K562 (cell line): ENCODE measurements at regions of chr1 and their contacts with region 1.

Region 1: GRCh38 chr1:32215629-32216480 is 6.3 kb downstream of the TMEM234 start:
- DNase-seq: peak; percentile 72 to 87 (median 79)
- ATAC-seq: peak; percentile 96
- H3K4me3 ChIP-seq: no peak overlapping the region
- H3K27ac ChIP-seq: no peak overlapping the region
- H3K4me1 ChIP-seq: peaks cover 4 to 10% of the 10 kb centered on the region in 2 experiments; a peak in 4 of 5 replicates
- H3K27me3 ChIP-seq: no peaks in the 10 kb centered on the region
- CTCF ChIP-seq: peak; percentile 93 to 96 (median 96)
- EP300 ChIP-seq: no peak
- POLR2A ChIP-seq: no peak
- RAD21 ChIP-seq: peak; percentile 82 to 88

Region 2: DNA sequence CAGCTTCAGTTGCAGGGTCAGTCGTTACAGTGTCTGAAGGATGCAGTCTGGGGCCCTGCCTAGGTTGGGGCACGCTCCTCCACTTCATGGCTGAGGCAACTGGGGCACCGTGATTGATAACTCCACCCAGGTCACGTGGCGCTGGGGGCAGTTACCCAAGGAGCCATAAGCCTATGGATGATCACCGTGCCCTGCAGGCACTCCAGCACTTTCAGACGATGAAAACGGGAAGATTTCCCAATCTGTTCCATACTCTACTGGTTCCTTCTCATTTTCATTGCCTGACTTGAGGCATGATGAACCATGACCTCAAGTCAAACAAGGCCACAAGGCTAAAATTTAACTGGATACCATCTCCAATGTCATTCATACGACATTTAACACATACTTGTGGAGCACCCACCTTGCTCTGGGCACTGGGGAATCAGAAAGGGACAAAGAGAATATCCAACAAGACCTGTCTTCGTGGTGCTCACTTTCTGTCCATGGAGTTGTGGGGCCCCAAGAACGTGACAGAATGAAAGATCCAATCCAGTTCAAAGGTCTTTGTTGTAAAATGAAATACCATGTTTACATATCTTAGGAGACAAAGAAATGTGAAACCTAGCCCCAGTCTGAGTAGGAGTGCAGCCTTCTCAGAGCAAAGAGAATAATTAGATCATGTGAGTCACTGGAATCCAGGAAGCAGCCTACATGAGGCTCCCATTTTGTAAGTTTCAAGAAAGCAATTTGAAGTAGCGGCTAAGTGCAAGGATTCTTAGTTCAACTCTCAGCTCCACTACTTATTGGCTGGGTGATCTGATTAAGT is 360.6 kb before region 1 on chr1:
- CTCF ChIA-PET with region 1: no interaction called
- POLR2A ChIA-PET with region 1: no interaction called
- in situ Hi-C with region 1: no loop called
- intact Hi-C with region 1: no loop called
- DNase-seq: peak in 1 of 4 experiments; percentile 26
- ATAC-seq: peak; percentile 59
- H3K4me3 ChIP-seq: no peak overlapping the region
- H3K27ac ChIP-seq: peak overlapping the region; percentile 9; the same call in 1 of the 3 replicates
- H3K4me1 ChIP-seq: peaks cover 0 to 10% of the 10 kb centered on the region in 2 experiments; a peak in 3 of 5 replicates
- H3K27me3 ChIP-seq: no peaks in the 10 kb centered on the region; a peak in 1 of 5 replicates
- CTCF ChIP-seq: no peak
- EP300 ChIP-seq: no peak
- POLR2A ChIP-seq: no peak
- RAD21 ChIP-seq: no peak

Region 3: GRCh38 chr1:32200226-32201010 is 15.4 kb before region 1 on chr1 and contains the start of gene CCDC28B:
- CTCF ChIA-PET with region 1: no interaction called
- POLR2A ChIA-PET with region 1: interaction called, 80 read pairs
- in situ Hi-C with region 1: no loop called
- intact Hi-C with region 1: no loop called
- DNase-seq: peak; percentile 68 to 82 (median 74)
- ATAC-seq: peak; percentile 65
- H3K4me3 ChIP-seq: peak within 1 kb of the TSS; percentile 49
- H3K27ac ChIP-seq: peak within 1 kb of the TSS; percentile 75
- H3K4me1 ChIP-seq: peaks cover 20 to 46% of the 10 kb centered on the region in 2 experiments
- H3K27me3 ChIP-seq: no peaks in the 10 kb centered on the region
- CTCF ChIP-seq: no peak
- EP300 ChIP-seq: no peak
- POLR2A ChIP-seq: peak; percentile 38; the same call in 1 of the 2 replicates
- RAD21 ChIP-seq: no peak
- polyA plus RNA-seq, gene CCDC28B: 5.7 to 14.5 TPM

Region 4: DNA sequence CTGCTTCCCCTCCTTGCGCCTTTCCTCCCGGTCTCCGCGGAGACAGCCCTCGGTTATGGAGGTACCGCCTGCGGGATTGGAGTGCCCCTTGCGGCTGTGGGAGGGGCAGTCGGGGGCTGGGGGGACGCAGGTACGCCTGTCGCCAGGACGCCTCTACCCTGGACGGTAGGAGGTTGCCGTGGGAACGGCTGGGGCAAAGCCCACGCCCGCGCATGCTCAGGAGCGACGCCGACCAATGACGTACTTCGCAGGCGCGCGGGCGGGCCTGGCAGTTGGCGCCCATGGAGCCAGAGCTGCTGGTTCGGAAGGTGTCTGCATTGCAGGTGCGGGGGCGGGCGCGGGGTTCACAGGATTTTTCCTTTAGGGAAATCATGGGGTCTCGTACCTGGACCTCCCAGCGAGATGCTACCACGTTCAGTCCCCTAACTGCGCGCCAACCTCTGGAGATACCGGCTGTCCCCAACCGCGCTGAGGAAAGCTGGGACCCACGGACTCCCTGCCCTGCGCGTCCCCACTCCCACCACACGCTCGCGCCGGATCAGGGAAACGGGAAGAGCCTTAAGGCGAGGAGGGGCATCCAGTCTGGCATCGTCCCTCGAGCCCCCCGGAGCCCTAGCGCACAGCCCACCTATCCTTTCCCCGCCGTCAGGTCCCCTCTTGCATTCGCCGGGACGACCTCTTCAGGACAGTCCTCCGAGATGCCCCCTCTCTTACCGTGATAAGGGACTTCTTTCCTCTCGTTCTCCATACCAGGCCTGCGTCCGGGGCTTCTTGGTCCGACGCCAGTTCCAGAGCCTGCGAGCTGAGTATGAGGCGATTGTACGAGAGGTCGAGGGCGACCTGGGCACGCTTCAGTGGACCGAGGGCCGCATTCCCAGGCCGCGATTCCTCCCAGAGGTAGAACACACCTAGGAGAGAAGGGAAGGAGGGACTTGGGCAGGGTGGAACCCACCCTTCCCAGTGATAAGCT is 10.2 kb before region 1 on chr1 and contains the start of gene IQCC:
- CTCF ChIA-PET with region 1: no interaction called
- POLR2A ChIA-PET with region 1: interaction called, 17 read pairs
- in situ Hi-C with region 1: no loop called
- intact Hi-C with region 1: no loop called
- DNase-seq: peak; percentile 96 to 98 (median 97)
- ATAC-seq: peak; percentile 79
- H3K4me3 ChIP-seq: peak within 1 kb of the TSS; percentile 74
- H3K27ac ChIP-seq: peak within 1 kb of the TSS; percentile 87
- H3K4me1 ChIP-seq: peaks cover 22 to 47% of the 10 kb centered on the region in 2 experiments
- H3K27me3 ChIP-seq: no peaks in the 10 kb centered on the region
- CTCF ChIP-seq: peak in 2 of 3 experiments; percentile 23 to 30; a peak in 2 of 6 replicates
- EP300 ChIP-seq: peak; percentile 43
- POLR2A ChIP-seq: peak; percentile 94
- RAD21 ChIP-seq: peak in 1 of 2 experiments; percentile 10; a peak in 1 of 4 replicates
- polyA plus RNA-seq, gene IQCC: 8.4 to 10.4 TPM

Region 5: GRCh38 chr1:32228771-32229170 is 12.9 kb after region 1 on chr1:
- CTCF ChIA-PET with region 1: no interaction called
- POLR2A ChIA-PET with region 1: interaction called, 11 read pairs
- in situ Hi-C with region 1: no loop called
- intact Hi-C with region 1: no loop called
- DNase-seq: no peak
- ATAC-seq: no peak
- H3K4me3 ChIP-seq: no peak overlapping the region
- H3K27ac ChIP-seq: no peak overlapping the region
- H3K4me1 ChIP-seq: peaks cover 3% of the 10 kb centered on the region in 2 experiments; a peak in 3 of 5 replicates
- H3K27me3 ChIP-seq: no peaks in the 10 kb centered on the region
- CTCF ChIP-seq: no peak
- EP300 ChIP-seq: no peak
- POLR2A ChIP-seq: no peak
- RAD21 ChIP-seq: no peak

Region 6: GRCh38 chr1:32321712-32322291 is 105.9 kb after region 1 on chr1:
- CTCF ChIA-PET with region 1: interaction called, 9 read pairs
- POLR2A ChIA-PET with region 1: interaction called, 5 read pairs
- in situ Hi-C with region 1: no loop called
- intact Hi-C with region 1: loop called (anchors 2 kb)
- DNase-seq: no peak
- ATAC-seq: no peak; the same call in 2 of the 3 replicates
- H3K4me3 ChIP-seq: no peak overlapping the region
- H3K27ac ChIP-seq: no peak overlapping the region
- H3K4me1 ChIP-seq: no peaks in the 10 kb centered on the region
- H3K27me3 ChIP-seq: no peaks in the 10 kb centered on the region
- CTCF ChIP-seq: no peak
- EP300 ChIP-seq: no peak
- POLR2A ChIP-seq: no peak
- RAD21 ChIP-seq: no peak

Region 7: DNA sequence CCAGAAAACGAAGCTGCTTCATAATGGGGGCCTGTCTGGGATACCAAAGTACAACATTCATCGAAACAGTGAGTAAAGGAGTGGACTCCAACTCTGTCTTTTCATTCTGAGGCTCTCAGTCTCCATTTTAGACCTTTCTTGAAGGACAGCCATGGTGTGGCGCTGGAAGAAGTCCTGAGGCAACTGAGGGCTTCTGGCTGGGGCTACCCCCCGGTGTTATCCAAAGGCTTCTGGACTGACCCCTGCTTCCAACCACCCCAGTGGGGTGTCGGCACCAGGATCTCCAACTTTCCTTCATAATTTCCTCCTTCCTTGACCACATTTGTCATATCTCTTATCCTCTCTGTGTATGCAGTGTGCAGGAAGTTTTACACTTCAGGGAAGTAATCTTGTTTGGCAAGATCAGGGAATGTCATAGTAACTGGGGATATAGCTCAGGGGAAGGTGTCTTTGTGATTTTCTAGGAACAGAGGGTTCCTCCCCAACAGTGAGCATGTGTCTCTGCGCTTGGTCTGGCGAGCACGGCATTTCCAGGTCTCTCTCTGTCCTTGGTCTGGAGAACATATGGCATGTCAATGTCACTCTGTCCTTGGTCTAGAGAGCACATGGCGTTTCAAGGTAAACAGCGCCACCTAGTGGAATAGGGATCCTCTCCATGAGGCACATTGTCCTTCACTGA is 197.8 kb after region 1 on chr1:
- CTCF ChIA-PET with region 1: interaction called, 12 read pairs
- POLR2A ChIA-PET with region 1: interaction called, 4 read pairs
- in situ Hi-C with region 1: no loop called
- intact Hi-C with region 1: loop called (anchors 1 kb)
- DNase-seq: peak; percentile 80 to 96 (median 82)
- ATAC-seq: peak; percentile 99
- H3K4me3 ChIP-seq: no peak overlapping the region
- H3K27ac ChIP-seq: peak overlapping the region; percentile 69
- H3K4me1 ChIP-seq: peaks cover 0 to 7% of the 10 kb centered on the region in 2 experiments; a peak in 3 of 5 replicates
- H3K27me3 ChIP-seq: no peaks in the 10 kb centered on the region
- CTCF ChIP-seq: peak; percentile 87 to 98 (median 93)
- EP300 ChIP-seq: no peak
- POLR2A ChIP-seq: no peak
- RAD21 ChIP-seq: peak; percentile 93 to 99